ENCODE measurements at regions of chr7 and their contacts with region 1.

Region 1: DNA sequence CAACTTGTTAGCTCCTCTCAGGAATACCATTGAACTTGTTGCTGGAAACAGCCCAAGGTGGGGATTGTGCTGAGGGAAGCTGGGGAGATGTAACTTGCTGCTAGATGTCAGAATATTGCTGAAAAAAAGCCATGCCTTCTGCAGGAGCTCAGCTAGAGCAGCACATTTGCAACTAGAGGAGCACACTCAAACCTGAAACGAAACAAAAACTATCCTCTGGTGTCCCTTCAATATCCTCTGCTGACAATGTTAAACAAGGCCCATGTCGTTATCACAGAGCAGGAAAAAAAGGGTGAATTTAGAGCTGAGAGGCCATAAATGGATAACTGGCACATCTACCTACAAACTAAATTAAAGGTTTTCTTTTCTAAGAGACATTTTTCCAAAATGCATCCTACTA is 53.7 kb upstream of the MACC1 start:
- DNase-seq: peak; percentile 74
- ATAC-seq: peak; percentile 90
- H3K4me3 ChIP-seq: no peak overlapping the region
- H3K27ac ChIP-seq: peak overlapping the region; percentile 73
- H3K4me1 ChIP-seq: peaks cover 17% of the 10 kb centered on the region
- H3K27me3 ChIP-seq: no peaks in the 10 kb centered on the region
- CTCF ChIP-seq: no peak
- EP300 ChIP-seq: no peak
- POLR2A ChIP-seq: no peak
- RAD21 ChIP-seq: no peak

Region 2: GRCh38 chr7:20287317-20287716 is 16.4 kb after region 1 on chr7:
- CTCF ChIA-PET with region 1: interaction called, 5 read pairs
- POLR2A ChIA-PET with region 1: interaction called, 4 read pairs
- RAD21 ChIA-PET with region 1: interaction called, 12 read pairs
- SMC1A ChIA-PET with region 1: interaction called, 21 read pairs
- in situ Hi-C with region 1: no loop called
- intact Hi-C with region 1: no loop called
- DNase-seq: no peak
- ATAC-seq: peak; percentile 52
- H3K4me3 ChIP-seq: no peak overlapping the region
- H3K27ac ChIP-seq: no peak overlapping the region
- H3K4me1 ChIP-seq: peaks cover 19% of the 10 kb centered on the region
- H3K27me3 ChIP-seq: no peaks in the 10 kb centered on the region
- CTCF ChIP-seq: no peak
- EP300 ChIP-seq: peak; percentile 53 to 74; a peak in 3 of 4 replicates
- POLR2A ChIP-seq: no peak
- RAD21 ChIP-seq: no peak

Measured in GM12878 (cell line).